Mammary epithelial cell (primary cell): ENCODE measurements at regions of chr20 and their contacts with region 1.

Region 1: DNA sequence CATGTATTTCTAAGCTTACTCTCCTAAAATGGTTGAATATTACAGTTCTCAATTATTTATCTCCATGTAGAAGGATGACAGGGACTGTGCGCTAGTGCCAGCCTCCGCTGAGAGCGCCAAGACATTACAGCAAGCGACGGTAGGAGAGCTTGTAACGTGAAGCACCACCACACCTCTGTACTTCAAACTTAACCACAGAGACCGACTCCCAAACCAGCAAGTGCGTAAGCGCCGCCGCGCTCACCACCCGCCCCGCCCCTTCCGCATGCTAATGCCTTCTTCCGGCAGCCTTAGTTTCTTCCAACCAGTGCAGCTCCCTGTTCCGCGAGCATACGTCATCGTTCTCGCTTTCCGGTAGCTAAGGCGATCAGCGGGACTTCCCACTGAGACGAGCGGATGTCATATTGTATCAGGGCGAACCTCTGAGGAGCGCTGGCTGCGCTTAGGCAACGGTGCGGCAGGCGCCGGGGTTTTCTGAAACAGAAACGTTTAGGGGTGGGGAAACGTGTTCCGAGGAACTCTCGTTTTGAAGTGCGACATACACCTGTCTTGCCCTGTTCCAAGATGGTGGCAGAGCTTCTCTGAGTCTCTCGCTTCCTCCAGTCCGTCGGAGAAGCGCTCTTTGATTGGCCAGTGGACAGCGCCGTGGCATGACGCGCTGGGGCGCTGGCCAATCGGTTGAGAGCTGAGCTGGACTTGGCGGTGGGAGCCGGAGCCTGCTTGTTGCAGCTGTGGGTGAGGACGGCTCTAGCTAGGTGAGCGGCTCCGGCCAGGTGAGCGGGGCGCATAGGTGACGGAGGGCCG is at the start of gene SEC23B:
- DNase-seq: peak; percentile 99
- H3K4me3 ChIP-seq: peak within 1 kb of the TSS; percentile 42 to 84 (median 68)
- H3K27ac ChIP-seq: peak within 1 kb of the TSS; percentile 90
- H3K4me1 ChIP-seq: peaks cover 15% of the 10 kb centered on the region
- H3K27me3 ChIP-seq: no peaks in the 10 kb centered on the region
- CTCF ChIP-seq: no peak
- total RNA-seq, gene SEC23B: 61.2 to 82.8 TPM

Region 2: GRCh38 chr20:18466894-18467730 is 40.3 kb before region 1 on chr20 and contains the starts of genes DZANK1 and POLR3F:
- CTCF ChIA-PET with region 1: no interaction called
- dilution Hi-C with region 1: no loop called
- in situ Hi-C with region 1: no loop called
- intact Hi-C with region 1: loop called (anchors 2 kb)
- DNase-seq: peak; percentile 92
- H3K4me3 ChIP-seq: peak within 1 kb of the TSS; percentile 74 to 96 (median 82)
- H3K27ac ChIP-seq: peak within 1 kb of the TSS; percentile 98
- H3K4me1 ChIP-seq: peaks cover 19% of the 10 kb centered on the region
- H3K27me3 ChIP-seq: no peaks in the 10 kb centered on the region
- CTCF ChIP-seq: no peak
- total RNA-seq, gene DZANK1: 2.7 to 2.8 TPM
- total RNA-seq, gene POLR3F: 10.7 to 15.0 TPM

Region 3: DNA sequence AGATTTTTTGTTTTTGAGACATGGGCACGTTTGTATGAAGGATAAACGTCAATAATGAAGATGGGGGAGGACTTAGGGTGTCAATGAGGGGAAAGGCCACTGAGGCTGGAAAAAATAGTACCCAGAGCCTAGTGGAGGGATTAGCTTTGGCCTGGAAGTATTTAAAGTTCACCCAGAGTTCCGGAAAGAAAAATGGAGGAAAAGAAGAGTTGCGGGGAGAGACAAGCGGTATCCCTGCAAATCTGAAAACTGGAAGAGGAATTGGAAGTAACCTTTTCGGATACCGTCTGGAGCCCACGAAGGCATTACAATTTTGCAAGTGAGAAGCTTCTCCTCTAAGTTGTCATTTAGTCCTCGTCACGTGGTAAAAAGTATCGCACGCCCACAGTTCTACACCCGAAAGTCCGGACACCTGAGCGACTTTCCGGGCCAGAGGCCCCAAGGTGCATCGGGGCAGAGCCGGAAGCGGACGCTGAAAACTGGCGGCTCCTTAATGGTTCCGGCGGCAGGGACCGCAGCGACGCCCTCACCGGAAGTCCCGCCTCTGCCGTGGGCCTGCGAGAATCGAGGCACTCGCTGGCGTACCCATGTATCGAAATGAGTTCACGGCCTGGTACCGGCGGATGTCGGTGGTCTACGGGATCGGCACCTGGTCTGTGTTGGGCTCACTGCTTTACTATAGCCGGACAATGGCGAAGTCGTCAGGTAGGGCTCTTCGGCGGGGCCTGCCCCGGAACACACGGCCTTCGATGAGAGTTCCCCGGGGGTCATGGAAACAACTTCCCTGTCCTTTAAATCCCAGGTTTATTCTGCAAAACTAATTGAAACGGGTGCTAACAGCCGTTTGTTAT is 59.7 kb after region 1 on chr20 and contains the start of gene SMIM26:
- CTCF ChIA-PET with region 1: no interaction called
- dilution Hi-C with region 1: no loop called
- in situ Hi-C with region 1: no loop called
- intact Hi-C with region 1: loop called (anchors 2 kb)
- DNase-seq: peak; percentile 93
- H3K4me3 ChIP-seq: peak within 1 kb of the TSS; percentile 63 to 90 (median 66)
- H3K27ac ChIP-seq: peak within 1 kb of the TSS; percentile 73
- H3K4me1 ChIP-seq: peaks cover 7% of the 10 kb centered on the region
- H3K27me3 ChIP-seq: no peaks in the 10 kb centered on the region
- CTCF ChIP-seq: no peak
- total RNA-seq, gene SMIM26: 58.5 to 72.9 TPM

Region 4: GRCh38 chr20:18587665-18588573 is 80.5 kb after region 1 on chr20 and contains the start of gene DTD1:
- CTCF ChIA-PET with region 1: no interaction called
- dilution Hi-C with region 1: no loop called
- in situ Hi-C with region 1: no loop called
- intact Hi-C with region 1: loop called (anchors 1 kb)
- DNase-seq: peak; percentile 79
- H3K4me3 ChIP-seq: peak within 1 kb of the TSS; percentile 77 to 98 (median 95)
- H3K27ac ChIP-seq: peak within 1 kb of the TSS; percentile 67
- H3K4me1 ChIP-seq: peaks cover 9% of the 10 kb centered on the region
- H3K27me3 ChIP-seq: no peaks in the 10 kb centered on the region
- CTCF ChIP-seq: peak; percentile 44 to 62
- total RNA-seq, gene DTD1: 58.7 to 83.2 TPM